ENCODE measurements at regions of chr12 and their contacts with region 1.

Region 1: DNA sequence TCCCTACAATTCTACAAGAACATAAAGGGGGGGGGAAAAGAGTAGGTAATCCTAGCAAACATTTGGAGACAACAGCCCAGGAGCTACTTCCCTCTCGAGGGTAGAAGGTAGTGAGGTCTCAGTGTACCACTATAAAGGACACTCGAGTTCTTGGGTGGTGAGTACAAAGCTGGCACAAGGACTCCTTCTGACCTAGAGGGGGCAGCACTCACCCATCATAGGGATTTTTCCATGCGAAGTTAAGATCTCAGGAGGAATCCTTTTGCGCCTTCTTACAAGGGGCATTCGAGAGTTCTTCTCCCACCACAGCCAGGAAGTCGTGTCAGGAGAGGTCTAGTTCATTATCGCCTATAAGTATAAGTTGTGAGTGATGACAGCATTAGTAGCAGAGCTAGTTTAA is 200.2 kb upstream of the RBM19 start:
- DNase-seq: no peak
- H3K4me3 ChIP-seq: no peak overlapping the region
- H3K27ac ChIP-seq: no peak overlapping the region
- H3K4me1 ChIP-seq: no peaks in the 10 kb centered on the region
- H3K27me3 ChIP-seq: peaks cover 0 to 11% (median 0%) of the 10 kb centered on the region in 4 donors
- CTCF ChIP-seq: peak; percentile 46 to 67 (median 53)
- EP300 ChIP-seq: no peak
- POLR2A ChIP-seq: no peak

Region 2: DNA sequence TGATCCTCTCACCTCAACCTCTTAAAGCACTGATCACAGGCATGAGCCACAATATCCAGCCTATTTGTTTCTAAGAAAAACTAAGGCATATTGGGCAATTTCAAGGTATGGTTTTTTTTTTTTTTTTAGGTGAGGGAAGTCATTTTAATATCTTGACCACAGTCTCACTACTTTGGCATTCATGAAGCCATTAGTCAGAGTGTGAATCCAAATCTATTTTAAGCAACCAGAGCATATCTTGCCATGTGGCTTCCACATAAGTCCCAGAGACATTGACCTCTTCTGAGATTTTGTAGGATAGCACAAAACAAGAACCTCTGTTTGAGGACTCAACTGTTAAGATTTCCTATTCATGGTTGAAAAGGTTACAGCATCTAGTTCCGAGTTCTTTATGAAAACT is 69.9 kb before region 1 on chr12:
- intact Hi-C with region 1: no loop called
- DNase-seq: no peak
- H3K4me3 ChIP-seq: no peak overlapping the region
- H3K27ac ChIP-seq: no peak overlapping the region
- H3K4me1 ChIP-seq: no peaks in the 10 kb centered on the region
- H3K27me3 ChIP-seq: no peaks in the 10 kb centered on the region
- CTCF ChIP-seq: no peak
- EP300 ChIP-seq: no peak
- POLR2A ChIP-seq: no peak

Region 3: GRCh38 chr12:114476159-114476558 is 309.8 kb after region 1 on chr12:
- intact Hi-C with region 1: loop called (anchors 5 kb)
- DNase-seq: no peak
- H3K4me3 ChIP-seq: no peak overlapping the region
- H3K27ac ChIP-seq: no peak overlapping the region
- H3K4me1 ChIP-seq: peaks cover 13 to 18% (median 16%) of the 10 kb centered on the region in 4 donors
- H3K27me3 ChIP-seq: peaks cover 0 to 52% (median 12%) of the 10 kb centered on the region in 4 donors
- CTCF ChIP-seq: peak; percentile 62 to 77 (median 71)
- EP300 ChIP-seq: no peak
- POLR2A ChIP-seq: no peak

Region 4: GRCh38 chr12:114508529-114509129 is 342.3 kb after region 1 on chr12:
- intact Hi-C with region 1: loop called (anchors 2 kb)
- DNase-seq: peak; percentile 97
- H3K4me3 ChIP-seq: no peak overlapping the region
- H3K27ac ChIP-seq: no peak overlapping the region
- H3K4me1 ChIP-seq: no peaks in the 10 kb centered on the region
- H3K27me3 ChIP-seq: peaks cover 0 to 39% (median 8%) of the 10 kb centered on the region in 4 donors
- CTCF ChIP-seq: peak; percentile 75 to 80 (median 77)
- EP300 ChIP-seq: no peak
- POLR2A ChIP-seq: no peak